ENCODE measurements at regions of chr3 and their contacts with region 1.

Region 1: DNA sequence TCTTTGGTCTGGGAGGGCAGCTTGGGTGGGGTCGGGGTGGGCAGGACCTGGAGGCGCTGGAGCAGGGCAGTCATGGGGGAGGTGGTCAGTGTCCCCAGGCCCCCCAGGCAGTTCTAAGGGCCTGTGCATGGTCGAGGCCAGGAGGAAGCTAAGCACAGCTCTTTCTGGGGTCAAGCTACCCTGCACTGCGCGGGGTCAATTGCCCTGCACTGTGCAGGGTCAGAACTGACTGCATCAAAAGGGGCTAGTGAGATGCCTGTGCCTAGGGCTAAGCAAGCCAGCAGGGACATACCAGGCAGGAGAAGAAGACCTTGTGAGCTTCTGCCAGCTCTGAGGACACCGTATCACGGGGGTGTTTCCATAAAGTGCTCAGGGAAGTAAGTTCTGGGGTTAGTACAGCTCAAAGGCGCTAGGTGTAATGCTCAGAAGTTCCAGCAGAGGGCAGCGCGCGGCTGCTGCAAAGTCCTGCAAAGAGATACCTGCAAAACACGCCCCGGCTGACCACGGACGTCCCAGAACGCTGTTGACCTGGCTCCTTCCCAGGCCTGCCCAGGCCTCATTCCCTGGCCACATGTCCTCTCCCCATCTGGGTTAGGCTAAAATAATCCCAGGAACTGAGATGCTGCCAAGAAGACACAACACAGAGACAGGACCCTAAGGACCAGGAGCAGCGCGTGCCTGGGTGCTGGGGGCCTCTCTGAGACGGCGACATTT is 18.8 kb upstream of the IQSEC1 start:
- DNase-seq: peak; percentile 69 to 97 (median 88)

Region 2: DNA sequence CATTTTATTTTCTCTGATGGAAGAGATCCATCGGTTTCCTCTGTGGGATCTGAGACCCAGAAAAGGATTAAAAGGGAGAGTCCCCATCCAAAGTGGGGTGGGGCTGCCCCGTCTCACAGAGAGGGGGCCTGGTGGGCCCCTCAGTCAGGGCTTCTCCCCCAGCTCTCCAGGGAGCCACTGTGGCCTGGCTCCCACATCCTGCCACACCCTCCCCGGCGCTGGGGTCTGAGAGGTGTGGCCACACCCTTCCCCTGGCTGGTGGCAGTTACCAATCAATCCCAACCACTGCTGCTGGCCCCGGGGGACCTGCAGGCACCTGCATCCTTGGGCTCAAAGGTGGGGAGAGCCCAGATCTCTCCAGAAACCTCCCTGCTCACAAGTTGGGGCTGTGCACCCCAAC is 143.0 kb after region 1 on chr3:
- intact Hi-C with region 1: no loop called
- DNase-seq: peak in 1 of 10 donors; percentile 72

Region 3: DNA sequence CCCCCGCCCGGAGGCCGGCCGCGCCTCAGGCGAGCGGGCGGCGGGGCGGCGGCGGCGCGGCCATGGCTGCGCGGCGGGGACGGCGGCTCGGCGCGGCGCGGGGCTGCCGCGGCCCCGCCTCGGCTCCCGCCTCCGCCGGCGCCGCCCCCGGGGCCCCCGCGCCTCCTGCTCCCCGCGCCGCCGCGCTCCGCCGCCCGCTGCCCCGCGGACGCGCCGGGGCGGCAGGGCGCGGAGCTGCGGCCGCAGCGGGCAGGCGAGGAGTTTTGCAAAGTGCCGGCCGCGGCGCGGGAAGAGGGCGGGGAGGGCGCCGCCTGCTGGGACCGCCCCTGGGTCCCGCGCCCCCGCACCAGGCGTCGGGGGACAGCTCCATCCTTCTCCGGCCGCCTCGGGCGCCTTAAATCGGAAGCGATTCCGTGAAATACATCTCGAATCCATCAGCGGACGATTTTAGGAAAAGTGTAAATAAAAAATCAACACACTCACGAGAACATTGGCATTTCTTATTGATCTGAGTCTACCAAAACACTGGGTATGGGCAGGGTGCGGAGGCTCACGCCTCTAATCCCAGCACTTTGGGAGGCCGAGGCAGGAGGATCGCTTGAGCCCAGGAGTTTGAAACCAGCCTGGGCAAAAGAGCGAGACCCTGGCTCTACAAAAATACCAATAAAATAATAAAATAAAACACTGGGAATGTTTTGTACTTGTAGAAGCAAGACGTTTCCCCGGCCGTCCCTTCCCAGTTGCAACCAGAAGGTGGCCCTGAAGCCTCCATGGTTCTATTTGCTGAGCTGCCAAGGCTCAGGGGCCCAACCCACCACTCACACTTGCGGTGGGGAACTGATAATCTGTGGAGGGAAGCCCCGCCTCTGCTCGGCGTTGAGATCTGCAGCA is 191.2 kb after region 1 on chr3:
- intact Hi-C with region 1: loop called (anchors 10 kb)
- DNase-seq: peak in 6 of 10 donors; percentile 9 to 90 (median 71)

Region 4: DNA sequence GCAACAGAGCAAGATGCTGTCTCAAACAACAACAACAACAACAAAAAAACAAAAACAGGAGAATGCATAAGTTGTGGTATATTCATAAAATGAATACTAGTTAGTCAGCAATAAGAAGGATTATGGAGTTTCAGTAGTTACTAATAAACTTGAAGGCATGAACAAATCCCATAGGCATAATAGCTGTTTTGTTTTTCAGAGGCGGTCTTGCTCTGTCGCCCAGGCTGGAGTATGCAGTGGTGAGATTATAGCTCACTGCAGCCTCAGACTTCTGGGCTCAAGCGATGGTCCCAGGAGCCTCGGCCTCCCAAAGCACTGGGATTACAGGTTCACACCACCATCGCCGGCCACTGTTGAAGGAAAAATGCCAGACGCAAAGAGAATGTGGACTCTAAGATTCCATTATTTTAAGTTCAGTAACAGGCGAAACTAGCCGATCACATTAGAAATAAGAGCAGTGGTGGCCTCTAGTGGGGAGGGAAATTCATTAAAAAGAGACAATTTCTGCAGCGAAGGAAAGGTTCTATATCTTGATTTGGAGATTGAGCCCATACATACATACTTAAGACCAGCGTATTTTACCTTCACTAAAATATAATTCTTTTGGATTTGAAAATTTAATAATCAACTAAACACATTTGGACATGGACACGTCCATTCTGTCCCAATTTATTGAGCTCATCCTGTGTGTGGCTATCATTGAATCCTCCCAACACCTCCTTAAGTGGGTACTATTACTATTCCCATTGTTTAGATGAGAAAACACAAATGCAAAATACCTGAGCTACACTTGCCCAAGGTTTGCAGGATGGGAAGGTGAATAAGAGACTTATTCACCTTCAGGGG is 360.7 kb after region 1 on chr3:
- intact Hi-C with region 1: loop called (anchors 1 kb)
- DNase-seq: peak in 5 of 10 donors; percentile 22 to 85 (median 37)

Region 5: GRCh38 chr3:13495921-13496723 is 404.1 kb after region 1 on chr3:
- intact Hi-C with region 1: loop called (anchors 5 kb)
- DNase-seq: peak; percentile 79 to 97 (median 84)